Mammary epithelial cell (primary cell): ENCODE measurements at regions of chr3 and their contacts with region 1.

Region 1: GRCh38 chr3:142586803-142587406 is 8.4 kb upstream of the ATR start:
- DNase-seq: peak; percentile 78
- H3K4me3 ChIP-seq: no peak overlapping the region
- H3K27ac ChIP-seq: no peak overlapping the region
- H3K4me1 ChIP-seq: peaks cover 6% of the 10 kb centered on the region
- H3K27me3 ChIP-seq: no peaks in the 10 kb centered on the region
- CTCF ChIP-seq: peak; percentile 46 to 71

Region 2: GRCh38 chr3:142523921-142524566 is 62.9 kb before region 1 on chr3:
- CTCF ChIA-PET with region 1: no interaction called
- dilution Hi-C with region 1: no loop called
- in situ Hi-C with region 1: no loop called
- intact Hi-C with region 1: no loop called
- DNase-seq: no peak
- H3K4me3 ChIP-seq: no peak overlapping the region
- H3K27ac ChIP-seq: no peak overlapping the region
- H3K4me1 ChIP-seq: no peaks in the 10 kb centered on the region
- H3K27me3 ChIP-seq: no peaks in the 10 kb centered on the region
- CTCF ChIP-seq: no peak

Region 3: GRCh38 chr3:142680710-142681109 is 93.8 kb after region 1 on chr3:
- CTCF ChIA-PET with region 1: interaction called, 10 read pairs
- dilution Hi-C with region 1: no loop called
- in situ Hi-C with region 1: loop called in 1 of 2 experiments (anchors 10 kb)
- intact Hi-C with region 1: loop called (anchors 1 kb)
- DNase-seq: peak; percentile 9
- H3K4me3 ChIP-seq: no peak overlapping the region
- H3K27ac ChIP-seq: no peak overlapping the region
- H3K4me1 ChIP-seq: no peaks in the 10 kb centered on the region
- H3K27me3 ChIP-seq: no peaks in the 10 kb centered on the region
- CTCF ChIP-seq: peak in 1 of 2 donors; percentile 40

Region 4: DNA sequence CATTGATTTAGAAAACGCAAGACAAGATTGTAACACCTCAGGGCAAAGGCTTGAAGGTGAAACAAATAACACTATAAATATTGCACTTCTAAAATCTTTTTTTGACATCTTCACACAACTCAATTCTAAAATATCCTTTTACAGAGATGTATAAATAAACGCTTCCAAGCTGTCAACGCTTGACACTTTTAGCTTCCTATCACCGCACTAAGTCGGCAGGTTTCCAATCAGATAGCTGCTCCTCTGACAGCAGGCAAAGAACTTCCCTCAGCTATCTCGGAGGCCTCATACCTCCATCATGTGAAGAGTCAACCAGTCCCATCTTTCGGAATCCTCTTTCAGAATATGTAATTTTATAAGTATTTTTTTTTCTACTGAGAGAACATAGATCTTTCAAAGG is 231.0 kb after region 1 on chr3:
- CTCF ChIA-PET with region 1: interaction called, 10 read pairs
- dilution Hi-C with region 1: no loop called
- in situ Hi-C with region 1: loop called (anchors 10 to 25 kb)
- intact Hi-C with region 1: no loop called
- DNase-seq: no peak
- H3K4me3 ChIP-seq: no peak overlapping the region
- H3K27ac ChIP-seq: no peak overlapping the region
- H3K4me1 ChIP-seq: no peaks in the 10 kb centered on the region
- H3K27me3 ChIP-seq: no peaks in the 10 kb centered on the region
- CTCF ChIP-seq: no peak

Region 5: GRCh38 chr3:142904639-142905436 is 317.9 kb after region 1 on chr3:
- CTCF ChIA-PET with region 1: no interaction called
- dilution Hi-C with region 1: no loop called
- in situ Hi-C with region 1: no loop called
- intact Hi-C with region 1: loop called (anchors 1 kb)
- DNase-seq: peak; percentile 71
- H3K4me3 ChIP-seq: no peak overlapping the region
- H3K27ac ChIP-seq: no peak overlapping the region
- H3K4me1 ChIP-seq: peaks cover 3% of the 10 kb centered on the region
- H3K27me3 ChIP-seq: no peaks in the 10 kb centered on the region
- CTCF ChIP-seq: peak in 1 of 2 donors; percentile 33

Region 6: DNA sequence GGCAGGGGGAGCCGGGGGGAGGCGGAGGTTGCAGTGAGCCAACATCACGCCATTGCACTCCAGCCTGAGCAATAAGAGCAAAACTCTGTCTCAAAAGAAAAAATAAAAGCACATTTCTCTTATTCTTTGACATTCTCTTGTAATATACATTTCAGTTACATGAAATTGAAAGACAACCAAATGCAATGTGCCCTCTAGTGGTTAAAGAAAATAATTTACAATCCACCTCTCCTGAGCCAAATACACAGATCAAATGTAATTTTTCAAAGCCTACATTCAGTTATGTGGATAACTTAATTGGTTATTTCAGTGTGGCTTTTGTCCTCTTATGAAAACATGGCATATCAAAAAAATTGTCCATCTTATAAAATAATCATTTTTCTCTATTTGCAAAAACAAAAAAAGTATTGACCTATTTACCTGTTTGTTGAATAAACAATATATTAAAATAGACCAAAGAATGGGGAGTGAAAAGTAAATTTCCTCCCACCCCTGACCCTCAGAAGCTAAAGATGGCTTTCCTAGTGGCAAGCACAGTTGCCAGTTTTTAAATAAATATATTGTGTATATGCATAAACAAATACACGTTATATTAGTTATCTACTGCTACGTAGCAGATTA is 400.3 kb after region 1 on chr3:
- CTCF ChIA-PET with region 1: no interaction called
- dilution Hi-C with region 1: loop called (anchors 25 kb)
- in situ Hi-C with region 1: loop called in 1 of 2 experiments (anchors 10 kb)
- intact Hi-C with region 1: loop called (anchors 2 kb)
- DNase-seq: peak; percentile 27
- H3K4me3 ChIP-seq: no peak overlapping the region
- H3K27ac ChIP-seq: no peak overlapping the region
- H3K4me1 ChIP-seq: no peaks in the 10 kb centered on the region
- H3K27me3 ChIP-seq: no peaks in the 10 kb centered on the region
- CTCF ChIP-seq: peak; percentile 55 to 63

Region 7: GRCh38 chr3:142993958-142994442 is 407.1 kb after region 1 on chr3:
- CTCF ChIA-PET with region 1: no interaction called
- dilution Hi-C with region 1: loop called (anchors 25 kb)
- in situ Hi-C with region 1: loop called in 1 of 2 experiments (anchors 10 kb)
- intact Hi-C with region 1: loop called (anchors 1 kb)
- DNase-seq: peak; percentile 44
- H3K4me3 ChIP-seq: no peak overlapping the region
- H3K27ac ChIP-seq: no peak overlapping the region
- H3K4me1 ChIP-seq: no peaks in the 10 kb centered on the region
- H3K27me3 ChIP-seq: no peaks in the 10 kb centered on the region
- CTCF ChIP-seq: peak; percentile 66